ENCODE measurements at regions of chr7 and their contacts with region 1.

Region 1: GRCh38 chr7:130896898-130897514 is 163.0 kb upstream of the KLF14 start:
- DNase-seq: no peak
- H3K4me3 ChIP-seq: no peak overlapping the region
- H3K27ac ChIP-seq: peak overlapping the region; percentile 89
- H3K27me3 ChIP-seq: no peaks in the 10 kb centered on the region
- CTCF ChIP-seq: peak; percentile 81

Region 2: DNA sequence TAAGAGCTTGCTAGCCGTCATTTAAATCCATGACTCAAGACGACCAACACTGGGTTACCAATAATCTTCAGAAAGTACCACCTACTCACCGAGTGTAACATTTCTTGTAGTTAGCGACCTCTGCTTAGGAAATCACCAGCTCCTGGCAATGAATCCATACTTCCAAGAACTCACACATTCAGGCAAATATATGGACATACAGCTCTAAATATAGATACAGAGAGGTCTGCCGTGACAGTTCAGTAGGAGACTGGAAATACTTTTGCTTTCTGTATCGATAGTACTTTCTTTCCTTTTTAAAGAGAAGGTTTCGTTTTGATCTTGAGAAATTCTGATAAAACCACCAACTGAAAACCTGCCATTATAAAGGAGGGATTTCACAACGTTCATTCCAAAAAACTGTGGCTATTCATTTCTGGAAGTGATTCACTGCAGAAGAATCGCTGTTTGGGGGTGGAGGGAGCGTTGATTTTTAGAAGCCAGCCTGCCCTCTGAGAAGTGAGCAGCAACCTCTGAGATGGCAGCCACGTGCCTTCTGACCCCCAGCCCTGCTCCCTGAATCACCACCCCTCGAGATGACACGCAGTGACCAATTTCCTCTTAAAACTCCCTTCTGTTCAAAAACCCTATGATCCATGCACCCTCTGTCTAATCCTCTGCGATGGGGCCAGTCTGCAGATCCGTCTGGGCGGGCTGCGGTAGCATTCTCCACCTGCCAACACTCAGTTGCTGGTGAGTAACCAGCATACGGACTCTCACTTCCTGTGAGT is 16.0 kb after region 1 on chr7:
- CTCF ChIA-PET with region 1: interaction called, 29 read pairs
- POLR2A ChIA-PET with region 1: interaction called, 10 read pairs
- DNase-seq: peak; percentile 95
- H3K4me3 ChIP-seq: peak overlapping the region; percentile 59
- H3K27ac ChIP-seq: peak overlapping the region; percentile 97
- H3K27me3 ChIP-seq: no peaks in the 10 kb centered on the region
- CTCF ChIP-seq: no peak

Region 3: GRCh38 chr7:130929896-130930659 is 33.1 kb after region 1 on chr7:
- CTCF ChIA-PET with region 1: interaction called, 25 read pairs
- POLR2A ChIA-PET with region 1: interaction called, 5 read pairs
- DNase-seq: no peak
- H3K4me3 ChIP-seq: no peak overlapping the region
- H3K27ac ChIP-seq: no peak overlapping the region
- H3K27me3 ChIP-seq: no peaks in the 10 kb centered on the region
- CTCF ChIP-seq: no peak

Region 4: GRCh38 chr7:130961128-130961601 is 64.2 kb after region 1 on chr7:
- CTCF ChIA-PET with region 1: interaction called, 37 read pairs
- POLR2A ChIA-PET with region 1: interaction called, 3 read pairs
- DNase-seq: no peak
- H3K4me3 ChIP-seq: peak overlapping the region; percentile 26
- H3K27ac ChIP-seq: peak overlapping the region; percentile 97
- H3K27me3 ChIP-seq: no peaks in the 10 kb centered on the region
- CTCF ChIP-seq: no peak

Region 5: GRCh38 chr7:130988443-130988842 is 91.4 kb after region 1 on chr7:
- CTCF ChIA-PET with region 1: interaction called, 19 read pairs
- POLR2A ChIA-PET with region 1: interaction called, 3 read pairs
- DNase-seq: no peak
- H3K4me3 ChIP-seq: no peak overlapping the region
- H3K27ac ChIP-seq: no peak overlapping the region
- H3K27me3 ChIP-seq: no peaks in the 10 kb centered on the region
- CTCF ChIP-seq: no peak

Region 6: DNA sequence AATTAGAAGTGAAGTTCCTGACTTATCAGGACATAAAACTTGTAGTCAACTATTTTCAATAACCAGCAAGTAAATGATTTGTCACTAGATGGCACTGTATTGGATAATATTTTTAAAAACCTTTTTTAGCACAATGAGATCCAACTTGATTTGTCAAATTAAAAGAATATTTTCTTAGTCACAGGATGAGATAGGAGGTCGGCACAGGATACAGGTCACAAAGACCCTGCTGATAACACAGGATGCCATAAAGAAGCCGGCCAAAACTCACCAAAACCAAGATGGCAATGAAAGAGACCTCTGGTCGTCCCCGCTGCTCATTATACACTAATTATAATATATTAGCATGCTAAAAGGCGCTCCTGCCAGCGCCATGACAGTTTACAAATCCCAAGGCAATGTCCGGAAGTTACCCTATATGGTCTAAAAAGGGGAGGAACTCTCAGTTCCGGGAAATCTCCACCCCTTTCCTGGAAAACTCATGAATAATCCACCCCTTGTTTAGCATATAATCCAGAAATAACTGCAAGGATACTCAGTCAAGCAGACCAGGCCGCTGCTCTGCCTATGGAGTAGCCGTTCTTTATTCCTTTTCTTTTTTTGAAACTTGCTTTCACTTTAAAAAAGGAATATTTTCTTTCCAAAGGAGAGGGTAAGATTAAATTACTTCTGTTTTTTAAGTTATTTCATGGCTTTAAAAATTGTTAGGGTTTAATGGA is 174.9 kb after region 1 on chr7:
- CTCF ChIA-PET with region 1: interaction called, 15 read pairs
- POLR2A ChIA-PET with region 1: no interaction called
- DNase-seq: no peak
- H3K4me3 ChIP-seq: no peak overlapping the region
- H3K27ac ChIP-seq: no peak overlapping the region
- H3K27me3 ChIP-seq: no peaks in the 10 kb centered on the region
- CTCF ChIP-seq: peak; percentile 46